Stomach (tissue), 19 donors: ENCODE measurements at regions of chr13 and their contacts with region 1.

Region 1: DNA sequence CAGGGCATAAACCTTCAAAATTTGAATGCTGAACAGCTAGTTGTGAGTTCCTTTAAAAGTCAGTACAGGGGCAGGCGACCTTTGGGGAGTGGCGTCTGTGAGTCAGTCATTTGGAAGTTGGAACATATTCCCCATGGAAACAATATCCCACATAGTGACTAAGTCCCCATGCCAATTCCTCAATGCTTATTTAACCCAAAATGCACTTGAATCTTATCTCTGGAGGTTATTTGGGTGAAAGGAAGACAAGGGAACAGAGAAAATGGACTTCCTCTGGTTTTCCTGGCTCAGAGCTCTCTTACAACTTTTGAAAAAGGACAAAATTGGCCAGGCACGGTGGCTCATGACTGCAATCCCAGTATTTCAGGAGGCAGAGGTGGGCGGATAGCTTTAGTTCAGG is 479.2 kb upstream of the NBEA start:
- DNase-seq: peak; percentile 29 to 38
- H3K4me3 ChIP-seq: no peak overlapping the region
- H3K27ac ChIP-seq: no peak overlapping the region
- H3K4me1 ChIP-seq: peaks cover 4 to 44% (median 20%) of the 10 kb centered on the region in 4 donors
- H3K27me3 ChIP-seq: no peaks in the 10 kb centered on the region
- CTCF ChIP-seq: no peak
- EP300 ChIP-seq: no peak
- POLR2A ChIP-seq: no peak

Region 2: GRCh38 chr13:34214686-34215085 is 248.2 kb before region 1 on chr13:
- intact Hi-C with region 1: no loop called
- DNase-seq: no peak
- H3K4me3 ChIP-seq: no peak overlapping the region
- H3K27ac ChIP-seq: no peak overlapping the region
- H3K4me1 ChIP-seq: no peaks in the 10 kb centered on the region
- H3K27me3 ChIP-seq: no peaks in the 10 kb centered on the region
- CTCF ChIP-seq: no peak
- EP300 ChIP-seq: no peak
- POLR2A ChIP-seq: no peak

Region 3: GRCh38 chr13:34372581-34372980 is 90.3 kb before region 1 on chr13:
- intact Hi-C with region 1: loop called (anchors 10 kb)
- DNase-seq: no peak
- H3K4me3 ChIP-seq: no peak overlapping the region
- H3K27ac ChIP-seq: no peak overlapping the region
- H3K4me1 ChIP-seq: no peaks in the 10 kb centered on the region
- H3K27me3 ChIP-seq: no peaks in the 10 kb centered on the region
- CTCF ChIP-seq: no peak
- EP300 ChIP-seq: no peak
- POLR2A ChIP-seq: no peak